WTC11 (cell line): ENCODE measurements at regions of chr4 and their contacts with region 1.

Region 1: DNA sequence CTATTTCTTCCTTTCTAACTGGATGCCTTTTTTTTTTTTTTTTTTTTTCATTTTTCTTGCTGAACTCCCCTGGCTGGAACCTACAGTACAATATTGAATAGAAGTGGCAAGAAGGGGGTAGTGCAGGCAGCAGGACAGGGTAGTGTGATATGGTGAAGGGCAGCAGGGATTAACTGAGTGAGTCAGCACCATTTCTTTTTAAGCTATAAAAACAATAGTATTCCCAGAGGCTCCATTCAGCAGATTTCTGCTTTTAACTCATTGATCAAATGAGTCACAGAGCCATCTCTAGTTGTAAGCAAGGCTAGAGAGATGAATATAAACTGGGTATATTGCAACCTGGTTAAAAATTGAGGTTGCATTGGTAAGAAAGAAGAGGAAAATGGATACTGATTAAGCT is 53.6 kb upstream of the SETD7 start:
- DNase-seq: no peak
- ATAC-seq: no peak
- H3K4me3 Mint-ChIP-seq: no peak overlapping the region
- H3K27ac Mint-ChIP-seq: no peak overlapping the region
- H3K4me1 Mint-ChIP-seq: 0 out of 2 replicates have a peak, but pooled peaks cover 11% of the 10 kb centered on the region
- H3K27me3 Mint-ChIP-seq: peaks cover 18% of the 10 kb centered on the region
- CTCF ChIP-seq: no peak

Region 2: GRCh38 chr4:139007640-139008039 is 602.0 kb before region 1 on chr4:
- CTCF ChIA-PET with region 1: no interaction called
- POLR2A ChIA-PET with region 1: interaction called, 12 read pairs
- DNase-seq: no peak
- ATAC-seq: no peak
- H3K4me3 Mint-ChIP-seq: no peak overlapping the region
- H3K27ac Mint-ChIP-seq: no peak overlapping the region
- H3K4me1 Mint-ChIP-seq: peaks cover 11% of the 10 kb centered on the region
- H3K27me3 Mint-ChIP-seq: no peaks in the 10 kb centered on the region
- CTCF ChIP-seq: no peak

Region 3: GRCh38 chr4:139540632-139541031 is 69.0 kb before region 1 on chr4:
- CTCF ChIA-PET with region 1: no interaction called
- POLR2A ChIA-PET with region 1: no interaction called
- DNase-seq: no peak
- ATAC-seq: no peak
- H3K4me3 Mint-ChIP-seq: no peak overlapping the region
- H3K27ac Mint-ChIP-seq: 0 out of 2 replicates have a peak overlapping the region, but pooled peaks have one; percentile 9
- H3K4me1 Mint-ChIP-seq: peaks cover 17% of the 10 kb centered on the region
- H3K27me3 Mint-ChIP-seq: no peaks in the 10 kb centered on the region
- CTCF ChIP-seq: no peak

Region 4: DNA sequence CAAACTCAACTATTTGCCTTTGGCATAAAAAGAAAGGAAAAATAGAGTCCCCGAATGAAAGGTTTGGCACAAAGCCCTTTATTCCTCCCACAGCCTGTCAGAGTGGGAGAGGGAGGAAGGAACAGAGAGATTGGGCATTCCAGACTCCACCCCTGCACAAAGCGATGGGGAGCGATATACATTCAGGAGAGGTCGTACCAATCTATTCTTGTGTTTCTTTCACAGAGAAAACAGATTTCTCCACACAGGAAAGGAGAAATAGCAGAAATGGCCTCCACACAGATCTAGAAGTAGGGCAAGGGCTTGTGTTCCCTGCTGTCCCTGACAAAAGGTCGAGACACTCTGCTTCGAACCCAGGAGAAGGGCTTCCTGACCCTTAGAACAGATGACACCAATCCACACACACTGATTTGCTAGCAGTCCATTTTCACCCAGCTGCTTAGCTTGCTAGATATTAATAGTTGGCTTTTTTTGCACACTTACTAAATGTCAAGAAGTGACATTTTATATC is 346.9 kb after region 1 on chr4:
- CTCF ChIA-PET with region 1: no interaction called
- POLR2A ChIA-PET with region 1: no interaction called
- DNase-seq: no peak
- ATAC-seq: no peak
- H3K4me3 Mint-ChIP-seq: no peak overlapping the region
- H3K27ac Mint-ChIP-seq: no peak overlapping the region
- H3K4me1 Mint-ChIP-seq: peaks cover 30% of the 10 kb centered on the region
- H3K27me3 Mint-ChIP-seq: no peaks in the 10 kb centered on the region
- CTCF ChIP-seq: no peak